Dorsolateral prefrontal cortex (tissue), 120 donors: ENCODE measurements at regions of chr6 and their contacts with region 1.

Region 1: DNA sequence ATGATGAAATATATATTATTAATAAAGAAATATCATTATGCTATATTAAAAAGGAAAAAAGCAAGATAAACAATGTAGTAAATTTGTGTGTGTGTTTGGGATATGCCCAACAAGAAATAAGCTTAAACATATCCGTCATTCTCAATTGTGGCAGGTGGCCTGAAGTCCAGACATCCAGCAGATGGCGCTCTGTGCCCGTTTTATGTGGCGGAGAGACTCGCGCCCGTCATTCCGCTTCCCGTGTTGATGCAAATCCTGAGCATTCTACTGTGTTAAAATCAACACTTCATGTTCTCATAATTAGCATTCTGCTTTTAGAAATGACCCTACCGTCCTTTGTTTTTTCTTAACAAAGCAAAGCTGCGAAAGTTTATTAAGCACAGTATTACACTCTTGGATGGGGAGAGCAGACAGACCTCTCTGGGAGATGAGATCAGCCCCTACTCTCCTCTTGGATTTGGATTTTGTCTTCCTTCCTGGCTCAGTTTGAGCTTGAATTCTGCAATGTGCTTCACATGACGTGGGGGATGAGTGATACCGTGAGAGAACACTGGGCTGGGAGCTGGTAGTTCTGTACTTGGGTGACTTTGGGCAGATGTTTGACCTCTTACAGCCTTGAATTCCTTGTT is 125.8 kb downstream of the MCHR2 start:
- DNase-seq: peak; percentile 71 to 90 (median 84)
- H3K4me3 ChIP-seq: peak overlapping the region in 23 of 59 donors; percentile 3 to 47 (median 25)
- H3K27ac ChIP-seq: peak overlapping the region in 15 of 59 donors; percentile 11 to 63 (median 43)
- H3K27me3 ChIP-seq: peaks cover 0 to 30% (median 0%) of the 10 kb centered on the region in 45 donors
- CTCF ChIP-seq: peak; percentile 79 to 95 (median 89)

Region 2: GRCh38 chr6:99993533-99994251 is 125.5 kb after region 1 on chr6 and contains the start of gene MCHR2:
- intact Hi-C with region 1: loop called in 1 of 2 experiments (anchors 5 kb)
- DNase-seq: peak in 4 of 10 donors; percentile 17 to 48 (median 38)
- H3K4me3 ChIP-seq: peak within 1 kb of the TSS in 58 of 59 donors; percentile 4 to 67 (median 46)
- H3K27ac ChIP-seq: peak within 1 kb of the TSS in 53 of 59 donors; percentile 6 to 83 (median 63)
- H3K27me3 ChIP-seq: peaks cover 0 to 47% (median 17%) of the 10 kb centered on the region in 45 donors
- CTCF ChIP-seq: no peak
- total RNA-seq, gene MCHR2: 2.9 to 25.4 (median 10.6) TPM

Region 3: GRCh38 chr6:100099189-100100074 is 231.2 kb after region 1 on chr6:
- intact Hi-C with region 1: loop called (anchors 2 kb)
- DNase-seq: no peak
- H3K4me3 ChIP-seq: no peak overlapping the region
- H3K27ac ChIP-seq: no peak overlapping the region
- H3K27me3 ChIP-seq: peaks cover 0 to 5% (median 0%) of the 10 kb centered on the region in 45 donors
- CTCF ChIP-seq: peak; percentile 49 to 87 (median 72)

Region 4: DNA sequence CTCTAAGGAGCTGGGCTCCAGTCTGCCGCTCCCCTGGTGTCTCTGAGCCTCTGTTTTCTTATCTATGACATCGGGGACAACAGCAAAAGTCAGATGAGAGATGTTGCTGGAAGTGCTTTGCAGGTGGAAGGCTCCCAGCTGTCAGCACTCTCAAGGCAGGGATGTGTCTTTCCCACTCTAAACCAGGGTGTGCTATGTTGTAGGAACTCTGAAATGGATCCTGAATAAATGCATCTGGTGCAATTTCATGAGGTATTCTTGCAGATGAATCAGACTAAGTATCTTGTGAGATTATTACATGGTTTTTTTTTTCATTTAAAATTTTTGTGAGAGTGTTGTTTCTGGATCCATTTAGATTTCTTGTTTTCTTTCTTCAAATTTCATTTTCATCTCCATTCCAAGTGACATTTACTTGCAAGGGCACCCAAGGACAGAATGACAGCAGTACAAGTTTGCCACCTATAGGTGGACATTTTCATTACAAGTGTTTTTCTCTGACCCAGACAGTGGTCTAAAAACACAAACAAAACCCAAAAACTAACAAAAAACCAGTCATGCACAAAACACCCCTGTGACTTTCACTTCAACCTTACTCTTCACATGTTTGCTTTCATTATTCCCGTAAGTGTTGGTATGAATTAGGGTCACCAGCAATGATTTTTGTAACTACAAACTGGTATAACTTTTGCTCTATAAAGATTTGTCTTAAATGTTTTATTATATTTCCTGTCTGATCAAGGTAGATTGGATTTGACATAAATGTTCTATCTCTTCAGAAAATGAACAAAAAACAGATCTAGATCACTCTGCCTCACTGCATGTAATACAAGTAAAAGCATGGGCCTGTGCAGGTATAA is 611.2 kb after region 1 on chr6:
- intact Hi-C with region 1: loop called in 1 of 2 experiments (anchors 5 kb)
- DNase-seq: no peak
- H3K4me3 ChIP-seq: no peak overlapping the region
- H3K27ac ChIP-seq: no peak overlapping the region
- H3K27me3 ChIP-seq: peaks cover 0 to 29% (median 6%) of the 10 kb centered on the region in 45 donors
- CTCF ChIP-seq: peak; percentile 37 to 85 (median 72)